ENCODE measurements at regions of chr18 and their contacts with region 1.

Region 1: GRCh38 chr18:26621161-26622026 is 73.0 kb upstream of the KCTD1 start:
- DNase-seq: peak; percentile 18
- ATAC-seq: peak; percentile 96
- H3K4me3 ChIP-seq: peak overlapping the region; percentile 47 to 54
- H3K27ac ChIP-seq: peak overlapping the region; percentile 54; the same call in 1 of the 2 replicates
- H3K4me1 ChIP-seq: no peaks in the 10 kb centered on the region
- H3K27me3 ChIP-seq: no peaks in the 10 kb centered on the region
- CTCF ChIP-seq: peak; percentile 88

Region 2: DNA sequence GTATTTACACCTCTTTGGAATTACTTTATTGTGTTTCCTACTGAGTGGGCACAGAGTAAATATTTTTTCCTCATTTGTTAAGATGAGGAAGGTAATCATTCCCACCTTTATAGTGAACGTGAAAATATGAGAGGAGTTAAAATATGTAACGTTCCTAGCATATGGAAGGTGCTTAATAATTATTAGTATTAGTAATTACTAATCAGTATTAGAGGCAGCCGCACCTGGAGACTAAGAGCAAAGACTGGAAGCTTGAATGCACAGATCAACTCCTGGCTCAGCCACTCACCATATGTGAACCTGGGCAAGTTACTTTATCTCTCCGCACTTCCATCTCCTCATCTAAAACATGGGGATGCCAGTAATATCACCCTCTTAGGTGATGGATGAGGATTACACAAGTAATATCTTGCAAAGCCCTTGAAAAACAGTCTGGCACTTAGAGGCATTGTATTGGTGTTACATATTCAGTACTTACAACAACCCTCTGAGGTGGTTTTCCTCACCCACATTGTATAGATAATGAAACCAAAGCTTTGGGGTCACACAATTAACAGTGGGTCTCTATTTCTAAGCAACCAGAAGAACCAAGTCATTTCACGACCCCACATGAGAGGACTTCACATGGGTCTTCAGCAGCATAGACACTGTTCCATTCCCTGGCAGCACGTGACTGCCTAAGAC is 27.3 kb after region 1 on chr18:
- CTCF ChIA-PET with region 1: interaction called, 5 read pairs
- POLR2A ChIA-PET with region 1: no interaction called
- in situ Hi-C with region 1: no loop called
- intact Hi-C with region 1: loop called (anchors 1 kb)
- DNase-seq: no peak
- ATAC-seq: no peak
- H3K4me3 ChIP-seq: no peak overlapping the region
- H3K27ac ChIP-seq: no peak overlapping the region
- H3K4me1 ChIP-seq: no peaks in the 10 kb centered on the region; the same call in none of the 2 replicates
- H3K27me3 ChIP-seq: no peaks in the 10 kb centered on the region
- CTCF ChIP-seq: no peak

Measured in Panc1 (cell line).